HEK293 (cell line): ENCODE measurements at regions of chr9 and their contacts with region 1.

Region 1: GRCh38 chr9:32378993-32379729 is 5.3 kb upstream of the ACO1 start:
- H3K4me3 ChIP-seq: no peak overlapping the region
- H3K27ac ChIP-seq: no peak overlapping the region
- H3K4me1 ChIP-seq: no peaks in the 10 kb centered on the region
- CTCF ChIP-seq: 0 out of 2 replicates have a peak, but pooled peaks have one; percentile 26

Region 2: GRCh38 chr9:32177396-32177795 is 201.8 kb before region 1 on chr9:
- CTCF ChIA-PET with region 1: no interaction called
- POLR2A ChIA-PET with region 1: no interaction called
- H3K4me3 ChIP-seq: no peak overlapping the region
- H3K27ac ChIP-seq: no peak overlapping the region
- H3K4me1 ChIP-seq: no peaks in the 10 kb centered on the region
- CTCF ChIP-seq: no peak

Region 3: DNA sequence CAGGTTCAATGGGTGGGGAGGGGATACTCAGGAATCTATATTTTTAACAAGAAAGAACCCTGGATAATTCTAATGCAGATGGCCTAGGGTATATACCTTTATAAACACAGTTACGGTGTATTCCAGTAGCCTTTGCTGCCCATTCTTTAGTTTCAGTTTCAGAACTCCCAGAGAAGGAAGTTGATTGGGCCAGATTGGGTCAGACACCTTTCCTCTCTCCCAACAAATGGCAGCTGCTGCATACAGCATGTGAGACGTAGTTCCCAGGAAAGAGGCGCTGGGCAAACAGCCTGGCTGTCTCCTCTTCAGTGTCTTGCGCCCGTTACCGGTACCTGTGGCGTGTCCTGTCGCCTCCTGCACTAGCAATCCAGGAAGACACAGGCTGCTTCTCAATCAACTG is 25.7 kb after region 1 on chr9:
- CTCF ChIA-PET with region 1: no interaction called
- POLR2A ChIA-PET with region 1: no interaction called
- H3K4me3 ChIP-seq: no peak overlapping the region
- H3K27ac ChIP-seq: no peak overlapping the region
- H3K4me1 ChIP-seq: no peaks in the 10 kb centered on the region
- CTCF ChIP-seq: no peak

Region 4: GRCh38 chr9:32431940-32432555 is 52.9 kb after region 1 on chr9:
- CTCF ChIA-PET with region 1: interaction called, 43 read pairs
- POLR2A ChIA-PET with region 1: no interaction called
- H3K4me3 ChIP-seq: no peak overlapping the region
- H3K27ac ChIP-seq: no peak overlapping the region
- H3K4me1 ChIP-seq: no peaks in the 10 kb centered on the region
- CTCF ChIP-seq: peak; percentile 20; the same call in 1 of the 2 replicates

Region 5: GRCh38 chr9:32526041-32526706 is 147.0 kb after region 1 on chr9 and contains the start of gene RIGI:
- CTCF ChIA-PET with region 1: interaction called, 130 read pairs
- POLR2A ChIA-PET with region 1: interaction called, 31 read pairs
- H3K4me3 ChIP-seq: peak within 1 kb of the TSS; percentile 53
- H3K27ac ChIP-seq: peak within 1 kb of the TSS; percentile 69
- H3K4me1 ChIP-seq: peaks cover 4% of the 10 kb centered on the region; the same call in 1 of the 2 replicates
- CTCF ChIP-seq: peak; percentile 10; the same call in 1 of the 2 replicates

Region 6: DNA sequence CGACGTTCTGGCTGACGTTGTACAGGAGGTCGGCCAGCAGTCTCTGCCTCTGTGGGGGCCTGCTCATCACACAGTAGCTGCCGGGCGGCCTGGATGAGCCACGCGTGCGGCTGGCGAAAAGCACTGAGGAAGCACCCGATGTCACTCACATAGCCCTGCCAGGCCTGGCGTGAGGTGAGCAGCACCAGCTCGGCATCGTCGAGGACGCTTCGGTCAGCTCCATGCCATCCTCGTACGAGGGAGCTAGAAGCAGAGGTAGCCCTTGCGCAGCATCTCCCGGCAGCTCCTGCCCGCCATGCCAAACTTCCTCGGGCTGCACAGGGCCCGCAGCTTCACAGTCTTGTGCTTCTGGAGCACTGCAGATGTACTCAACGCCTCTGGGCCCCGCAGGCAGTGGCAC is 187.6 kb after region 1 on chr9:
- CTCF ChIA-PET with region 1: interaction called, 122 read pairs
- POLR2A ChIA-PET with region 1: interaction called, 14 read pairs
- H3K4me3 ChIP-seq: no peak overlapping the region
- H3K27ac ChIP-seq: no peak overlapping the region
- H3K4me1 ChIP-seq: peaks cover 4% of the 10 kb centered on the region; the same call in 1 of the 2 replicates
- CTCF ChIP-seq: no peak

Region 7: GRCh38 chr9:32579706-32580331 is 200.7 kb after region 1 on chr9:
- CTCF ChIA-PET with region 1: interaction called, 583 read pairs
- POLR2A ChIA-PET with region 1: interaction called, 9 read pairs
- H3K4me3 ChIP-seq: no peak overlapping the region
- H3K27ac ChIP-seq: no peak overlapping the region
- H3K4me1 ChIP-seq: no peaks in the 10 kb centered on the region; the same call in 1 of the 2 replicates
- CTCF ChIP-seq: no peak

Region 8: DNA sequence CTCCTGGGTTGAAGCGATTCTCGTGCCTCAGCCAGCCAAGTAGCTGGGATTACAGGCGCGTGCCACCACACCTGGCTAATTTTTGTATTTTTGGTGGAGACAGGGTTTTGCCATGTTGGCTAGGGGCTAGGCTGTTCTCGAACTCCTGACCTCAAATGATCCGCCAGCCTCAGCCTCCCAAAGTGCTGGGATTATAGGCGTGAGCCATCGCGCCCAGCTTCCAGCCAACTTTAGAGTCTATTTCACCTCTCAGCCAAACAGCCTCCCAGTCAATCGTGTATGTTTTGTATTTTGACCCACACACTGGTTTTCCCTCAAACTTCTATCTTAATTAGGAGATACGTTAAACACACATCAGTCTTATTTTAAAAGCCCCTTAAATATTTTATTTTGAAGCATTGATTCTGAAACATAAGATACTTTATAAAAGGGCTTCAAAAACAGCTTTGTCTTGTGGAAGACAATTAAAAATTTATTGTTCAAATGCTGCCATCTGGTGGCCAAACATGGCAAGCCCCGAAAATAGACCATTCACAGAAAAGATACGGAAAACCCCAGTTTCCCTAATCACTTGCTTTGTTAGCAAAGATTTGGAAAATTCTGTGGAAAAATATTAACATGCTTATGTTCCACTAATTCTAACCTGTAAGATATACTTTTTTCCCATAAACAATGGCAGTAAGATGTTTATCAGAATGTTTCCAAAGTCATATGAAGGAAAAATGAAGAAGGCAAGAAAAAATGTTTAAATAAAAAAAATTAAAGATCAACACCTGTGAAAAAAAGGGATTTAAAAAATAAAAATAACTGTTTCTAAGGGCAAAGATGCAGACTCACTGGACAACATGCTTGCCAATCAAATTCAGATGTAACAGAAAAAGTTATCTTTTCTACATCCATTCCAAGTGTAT is 589.2 kb after region 1 on chr9:
- CTCF ChIA-PET with region 1: interaction called, 69 read pairs
- POLR2A ChIA-PET with region 1: no interaction called
- H3K4me3 ChIP-seq: no peak overlapping the region
- H3K27ac ChIP-seq: no peak overlapping the region
- H3K4me1 ChIP-seq: no peaks in the 10 kb centered on the region
- CTCF ChIP-seq: no peak